ENCODE measurements at regions of chr17 and their contacts with region 1.

Region 1: DNA sequence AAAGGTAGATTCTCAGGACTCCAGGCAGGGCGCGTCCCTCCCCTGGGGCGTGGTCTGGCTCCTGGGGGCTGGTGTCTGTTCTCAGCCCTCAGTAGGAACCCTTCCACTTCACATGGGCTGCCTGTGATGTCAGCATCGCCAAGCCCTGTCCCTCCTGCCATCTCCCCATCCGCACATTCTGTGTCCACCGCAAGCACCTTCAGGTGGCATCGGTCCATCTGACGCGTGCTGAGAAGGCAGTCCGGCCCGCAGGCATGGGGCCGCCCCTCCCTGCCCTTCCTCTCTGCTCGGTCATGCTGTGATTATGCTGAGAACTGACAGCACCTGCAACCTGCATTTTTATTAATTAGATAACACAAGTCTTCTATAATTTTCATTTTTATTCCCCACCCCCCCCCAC is 12.7 kb upstream of the DNAH17 start:
- DNase-seq: no peak
- ATAC-seq: no peak

Region 2: GRCh38 chr17:78541488-78542237 is 48.2 kb before region 1 on chr17:
- intact Hi-C with region 1: no loop called
- DNase-seq: no peak
- ATAC-seq: no peak

Region 3: GRCh38 chr17:78645421-78646295 is 55.8 kb after region 1 on chr17:
- intact Hi-C with region 1: loop called (anchors 5 kb)
- DNase-seq: peak; percentile 88
- ATAC-seq: peak; percentile 89